ENCODE measurements at regions of chr6 and their contacts with region 1.

Region 1: DNA sequence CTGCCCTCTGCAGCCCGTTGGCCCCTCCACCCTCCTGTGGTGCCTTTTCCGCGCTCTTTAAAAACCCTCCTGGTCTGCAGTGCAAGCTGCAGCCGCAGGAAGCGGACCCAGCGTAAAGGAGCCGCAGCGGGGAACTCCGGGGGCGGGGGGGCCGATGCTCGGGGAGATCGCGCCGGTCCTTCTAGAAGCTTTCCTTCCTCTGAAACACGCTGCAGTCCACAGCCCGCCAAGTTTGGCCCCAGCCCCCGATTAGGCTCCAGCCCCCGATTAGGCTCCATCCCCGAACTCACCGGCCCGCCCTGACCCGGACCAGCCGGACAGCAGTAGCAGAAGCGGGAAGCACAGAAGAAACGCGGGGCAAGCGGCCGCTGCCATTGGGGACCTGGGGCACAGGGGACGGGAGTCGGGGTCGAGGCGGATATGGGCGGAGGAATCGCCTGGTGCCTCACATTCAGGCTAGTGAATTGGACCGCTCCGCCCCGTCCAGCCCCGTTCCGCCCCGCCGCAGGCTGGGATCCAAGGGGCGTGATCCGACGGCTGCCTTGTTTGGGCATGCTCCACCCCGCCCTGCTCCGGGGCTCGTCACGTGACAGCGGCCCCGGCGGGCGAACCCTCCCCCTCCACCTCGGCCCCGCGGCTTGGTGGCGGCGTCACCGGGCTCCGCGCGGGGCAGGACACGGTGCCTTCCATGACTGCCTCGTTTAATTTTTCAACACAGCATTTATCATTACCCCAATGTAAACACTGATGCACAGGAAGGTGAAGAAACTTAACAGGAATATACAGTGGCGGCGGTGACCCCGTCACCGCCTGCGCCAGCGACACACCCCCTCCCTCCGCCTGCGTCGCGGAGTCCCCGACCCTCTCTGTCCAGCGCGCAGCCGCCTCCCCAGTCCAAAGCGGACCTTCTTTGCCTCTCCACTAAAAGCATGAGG is 20.3 kb downstream of the RAET1L start:
- DNase-seq: peak; percentile 89
- H3K4me3 ChIP-seq: peak overlapping the region; percentile 28 to 82 (median 50)
- H3K27ac ChIP-seq: no peak overlapping the region
- H3K4me1 ChIP-seq: peaks cover 2% of the 10 kb centered on the region
- H3K27me3 ChIP-seq: peaks cover 8 to 13% of the 10 kb centered on the region in 2 experiments
- CTCF ChIP-seq: peak in 1 of 2 donors; percentile 32
- POLR2A ChIP-seq: peak; percentile 39

Region 2: GRCh38 chr6:149941583-149942431 is 63.2 kb before region 1 on chr6 and contains the start of gene ULBP2:
- CTCF ChIA-PET with region 1: no interaction called
- POLR2A ChIA-PET with region 1: no interaction called
- dilution Hi-C with region 1: no loop called
- intact Hi-C with region 1: loop called (anchors 1 kb)
- DNase-seq: peak; percentile 97
- H3K4me3 ChIP-seq: peak within 1 kb of the TSS; percentile 72 to 84 (median 73)
- H3K27ac ChIP-seq: peak within 1 kb of the TSS; percentile 34
- H3K4me1 ChIP-seq: peaks cover 14% of the 10 kb centered on the region
- H3K27me3 ChIP-seq: peaks cover 28 to 37% of the 10 kb centered on the region in 2 experiments
- CTCF ChIP-seq: no peak
- POLR2A ChIP-seq: peak; percentile 98
- total RNA-seq, gene ULBP2: 7.0 and 14.0 TPM in 2 replicates